Motor neuron (in vitro differentiated cells): ENCODE measurements at regions of chr1 and their contacts with region 1.

Region 1: GRCh38 chr1:44213222-44214112 is at the start of gene DMAP1:
- ATAC-seq: peak; percentile 84 to 95 (median 90)
- H3K4me3 ChIP-seq: peak within 1 kb of the TSS; percentile 74 to 92 (median 85)
- H3K27ac ChIP-seq: peak within 1 kb of the TSS; percentile 53 to 77
- H3K4me1 ChIP-seq: peaks cover 18 to 24% of the 10 kb centered on the region in 2 donors
- total RNA-seq, gene DMAP1: 13.3 to 58.8 (median 45.4) TPM

Region 2: GRCh38 chr1:44460107-44460882 is 246.8 kb after region 1 on chr1:
- in situ Hi-C with region 1: no loop called
- ATAC-seq: peak in 1 of 8 experiments; percentile 10
- H3K4me3 ChIP-seq: no peak overlapping the region
- H3K27ac ChIP-seq: no peak overlapping the region
- H3K4me1 ChIP-seq: peaks cover 10 to 17% of the 10 kb centered on the region in 2 donors

Region 3: GRCh38 chr1:44631647-44632539 is 418.4 kb after region 1 on chr1:
- in situ Hi-C with region 1: loop called in 1 of 9 experiments (anchors 25 kb)
- ATAC-seq: peak; percentile 71 to 83 (median 78)
- H3K4me3 ChIP-seq: peak overlapping the region; percentile 41 to 81 (median 45)
- H3K27ac ChIP-seq: peak overlapping the region; percentile 86 to 87
- H3K4me1 ChIP-seq: peaks cover 37 to 42% of the 10 kb centered on the region in 2 donors

Region 4: GRCh38 chr1:44652445-44653106 is 439.1 kb after region 1 on chr1:
- in situ Hi-C with region 1: loop called in 2 of 9 experiments (anchors 10 to 25 kb)
- ATAC-seq: peak; percentile 75 to 93 (median 86)
- H3K4me3 ChIP-seq: no peak overlapping the region
- H3K27ac ChIP-seq: no peak overlapping the region
- H3K4me1 ChIP-seq: peaks cover 20 to 37% of the 10 kb centered on the region in 2 donors